ENCODE measurements at regions of chr3 and their contacts with region 1.

Region 1: GRCh38 chr3:137032465-137033120 is 74.8 kb downstream of the IL20RB start:
- DNase-seq: peak; percentile 49 to 67
- ATAC-seq: peak; percentile 78 to 94
- H3K4me3 ChIP-seq: peak overlapping the region; percentile 35 to 48 (median 44)
- H3K27ac ChIP-seq: no peak overlapping the region
- H3K4me1 ChIP-seq: peaks cover 3 to 5% of the 10 kb centered on the region in 2 donors
- H3K27me3 ChIP-seq: no peaks in the 10 kb centered on the region
- CTCF ChIP-seq: peak; percentile 77 to 94 (median 89)
- POLR2A ChIP-seq: no peak

Region 2: DNA sequence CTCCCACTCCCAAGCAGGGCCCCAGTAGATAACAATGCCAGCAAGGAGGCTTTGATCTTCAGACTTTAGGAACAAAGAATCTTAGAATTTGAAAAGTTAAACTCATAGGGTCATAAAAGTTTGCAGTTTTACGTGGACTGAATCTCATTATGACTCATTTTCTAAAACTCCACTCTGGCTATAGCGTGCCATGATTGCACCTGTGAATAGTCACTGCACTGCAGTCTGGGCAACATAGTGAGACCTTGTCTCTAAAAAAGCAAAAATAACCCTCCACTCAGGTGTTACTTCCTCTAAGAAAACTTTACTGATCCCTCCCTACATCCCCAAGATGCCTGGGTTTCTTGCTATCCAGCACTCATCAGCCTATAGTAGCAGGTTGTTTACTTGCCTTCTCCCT is 29.7 kb after region 1 on chr3:
- in situ Hi-C with region 1: no loop called
- intact Hi-C with region 1: no loop called
- DNase-seq: no peak
- ATAC-seq: no peak
- H3K4me3 ChIP-seq: no peak overlapping the region
- H3K27ac ChIP-seq: no peak overlapping the region
- H3K4me1 ChIP-seq: no peaks in the 10 kb centered on the region
- H3K27me3 ChIP-seq: no peaks in the 10 kb centered on the region
- CTCF ChIP-seq: no peak
- POLR2A ChIP-seq: no peak

Region 3: GRCh38 chr3:137946345-137946973 is 913.9 kb after region 1 on chr3:
- in situ Hi-C with region 1: no loop called
- intact Hi-C with region 1: loop called (anchors 5 kb)
- DNase-seq: peak in 1 of 2 donors; percentile 13
- ATAC-seq: no peak
- H3K4me3 ChIP-seq: no peak overlapping the region
- H3K27ac ChIP-seq: no peak overlapping the region
- H3K4me1 ChIP-seq: no peaks in the 10 kb centered on the region
- H3K27me3 ChIP-seq: no peaks in the 10 kb centered on the region
- CTCF ChIP-seq: peak in 4 of 5 experiments; percentile 9 to 51 (median 32)
- POLR2A ChIP-seq: no peak

Measured in gastrocnemius medialis (tissue), 4 donors.